Activated CD4-positive, alpha-beta T cell treated with anti-CD3 and anti-CD28 coated beads for 36 hours (primary cell): ENCODE measurements at regions of chr17 and their contacts with region 1.

Region 1: GRCh38 chr17:2029911-2030778 is at the start of gene DPH1:
- DNase-seq: peak; percentile 94
- ATAC-seq: peak; percentile 91
- H3K4me3 Mint-ChIP-seq: peak within 1 kb of the TSS; percentile 88
- H3K27ac Mint-ChIP-seq: peak within 1 kb of the TSS; percentile 78
- H3K4me1 Mint-ChIP-seq: peaks cover 24% of the 10 kb centered on the region
- H3K27me3 Mint-ChIP-seq: peaks cover 20% of the 10 kb centered on the region
- total RNA-seq, gene DPH1: 29.1 to 37.0 TPM

Region 2: GRCh38 chr17:1882836-1883235 is 147.3 kb before region 1 on chr17:
- CTCF ChIA-PET with region 1: interaction called, 4 read pairs
- POLR2A ChIA-PET with region 1: interaction called, 6 read pairs
- intact Hi-C with region 1: loop called in 1 of 2 experiments (anchors 5 kb)
- DNase-seq: peak; percentile 40
- ATAC-seq: peak; percentile 44
- H3K4me3 Mint-ChIP-seq: no peak overlapping the region
- H3K27ac Mint-ChIP-seq: no peak overlapping the region
- H3K4me1 Mint-ChIP-seq: no peaks in the 10 kb centered on the region
- H3K27me3 Mint-ChIP-seq: no peaks in the 10 kb centered on the region

Region 3: DNA sequence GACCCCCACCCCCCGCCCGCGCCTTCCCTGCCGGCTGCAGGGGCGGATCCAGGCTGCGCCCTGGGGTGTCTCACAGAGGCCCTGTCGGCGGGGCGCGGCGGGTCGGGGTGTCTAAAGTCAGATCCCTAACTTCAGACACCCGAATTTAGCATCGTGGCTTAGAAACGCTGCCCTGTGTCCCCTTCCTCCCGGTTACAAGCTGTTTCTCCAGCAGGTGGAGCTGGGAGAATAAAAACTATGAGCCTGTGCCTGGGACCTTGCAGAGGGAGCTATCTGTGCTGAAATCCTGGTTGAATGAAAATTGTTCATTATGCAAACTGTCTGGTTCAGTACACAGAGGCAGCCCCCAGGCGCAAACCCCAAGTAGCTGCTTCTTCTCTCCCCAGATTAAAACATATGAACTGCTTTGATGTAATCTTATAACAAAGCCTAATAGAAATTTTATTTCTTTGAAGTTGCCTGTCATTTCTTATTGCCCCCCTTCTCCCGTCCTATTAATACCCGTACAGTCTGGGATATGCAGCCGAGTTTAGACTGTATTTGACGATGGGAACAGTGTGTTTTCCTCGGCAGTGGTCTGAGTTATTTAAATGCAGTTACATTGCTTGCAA is 121.3 kb before region 1 on chr17:
- CTCF ChIA-PET with region 1: interaction called, 4 read pairs
- POLR2A ChIA-PET with region 1: no interaction called
- intact Hi-C with region 1: loop called (anchors 1 to 5 kb)
- DNase-seq: peak; percentile 66
- ATAC-seq: peak; percentile 85
- H3K4me3 Mint-ChIP-seq: no peak overlapping the region
- H3K27ac Mint-ChIP-seq: no peak overlapping the region
- H3K4me1 Mint-ChIP-seq: peaks cover 2% of the 10 kb centered on the region
- H3K27me3 Mint-ChIP-seq: peaks cover 51% of the 10 kb centered on the region

Region 4: DNA sequence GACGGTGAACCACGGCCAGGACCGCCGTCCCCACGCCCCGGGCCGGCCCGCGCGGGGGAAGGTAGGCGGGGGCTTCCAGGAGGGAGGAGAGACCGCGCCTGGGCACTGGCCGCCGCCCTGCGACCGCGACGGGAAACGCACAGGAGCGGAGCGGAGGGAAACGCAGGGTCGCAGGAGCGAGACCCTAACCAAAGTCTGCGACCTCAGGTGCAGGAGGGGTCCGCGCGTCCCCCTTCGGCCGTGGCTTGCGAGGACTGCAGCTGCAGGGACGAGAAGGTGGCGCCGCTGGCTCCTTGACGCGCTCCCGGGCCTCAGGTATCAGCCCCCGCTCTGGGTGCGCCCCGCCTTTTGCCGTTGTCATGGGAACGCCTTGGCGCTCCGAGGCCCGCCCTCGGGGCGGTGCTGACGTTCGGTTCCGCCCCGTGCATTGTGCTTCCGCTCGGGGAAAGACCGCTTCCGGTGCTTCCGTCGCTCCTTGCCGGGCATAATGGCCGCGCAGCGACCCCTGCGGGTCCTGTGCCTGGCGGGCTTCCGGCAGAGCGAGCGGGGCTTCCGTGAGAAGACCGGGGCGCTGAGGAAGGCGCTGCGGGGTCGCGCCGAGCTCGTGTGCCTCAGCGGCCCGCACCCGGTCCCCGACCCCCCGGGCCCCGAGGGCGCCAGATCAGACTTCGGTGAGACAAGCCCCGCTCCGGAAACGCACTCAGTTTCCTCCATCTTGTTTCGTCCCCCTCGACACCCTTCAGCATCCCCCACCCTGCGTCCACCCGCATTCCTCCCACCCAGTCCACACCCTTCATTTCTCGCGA is 11.6 kb after region 1 on chr17 and contains the start of gene OVCA2:
- CTCF ChIA-PET with region 1: interaction called, 5 read pairs
- POLR2A ChIA-PET with region 1: no interaction called
- intact Hi-C with region 1: loop called in 1 of 2 experiments (anchors 1 kb)
- DNase-seq: peak; percentile 99
- ATAC-seq: peak; percentile 92
- H3K4me3 Mint-ChIP-seq: peak within 1 kb of the TSS; percentile 95
- H3K27ac Mint-ChIP-seq: peak within 1 kb of the TSS; percentile 95
- H3K4me1 Mint-ChIP-seq: peaks cover 23% of the 10 kb centered on the region
- H3K27me3 Mint-ChIP-seq: no peaks in the 10 kb centered on the region
- total RNA-seq, gene OVCA2: 31.4 to 38.6 TPM